OCI-LY7 (cell line): ENCODE measurements at regions of chr14 and their contacts with region 1.

Region 1: DNA sequence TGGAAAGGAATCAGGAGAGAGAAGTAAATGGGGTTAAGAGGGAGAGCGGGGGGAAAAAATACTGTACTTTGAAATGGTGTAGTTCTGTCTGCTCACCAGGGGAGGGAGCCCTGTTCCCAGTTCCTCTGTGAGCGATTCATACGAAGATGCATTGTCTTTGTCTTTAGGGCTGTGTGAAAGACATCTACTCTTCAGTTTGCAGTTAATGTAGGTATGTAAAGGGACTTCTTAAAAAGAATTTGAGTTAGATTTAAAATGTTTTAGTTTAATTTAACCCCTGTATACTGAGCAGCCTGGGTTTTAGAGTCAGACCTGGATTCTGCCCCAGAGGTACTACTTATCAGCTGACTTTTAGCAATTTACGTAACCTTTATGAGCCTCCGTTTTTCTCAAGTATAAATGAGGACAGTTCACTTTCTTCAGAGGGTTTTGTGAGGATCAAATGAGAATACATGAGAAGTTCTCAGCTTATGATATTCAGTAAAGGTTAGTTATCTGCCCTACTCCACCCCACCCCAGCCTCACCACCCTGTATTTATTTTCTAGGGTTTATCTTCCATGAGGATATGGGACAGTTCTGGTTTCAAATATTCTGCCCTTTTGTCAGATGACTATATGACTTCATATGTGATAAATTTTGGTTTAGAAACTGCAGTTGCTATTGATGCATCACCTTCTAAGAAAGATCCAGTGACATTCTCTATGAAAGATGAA is 82.5 kb upstream of the EVL start:
- DNase-seq: peak; percentile 72
- H3K4me3 ChIP-seq: no peak overlapping the region
- H3K27ac ChIP-seq: no peak overlapping the region
- H3K4me1 ChIP-seq: peaks cover 3% of the 10 kb centered on the region
- CTCF ChIP-seq: peak; percentile 97

Region 2: DNA sequence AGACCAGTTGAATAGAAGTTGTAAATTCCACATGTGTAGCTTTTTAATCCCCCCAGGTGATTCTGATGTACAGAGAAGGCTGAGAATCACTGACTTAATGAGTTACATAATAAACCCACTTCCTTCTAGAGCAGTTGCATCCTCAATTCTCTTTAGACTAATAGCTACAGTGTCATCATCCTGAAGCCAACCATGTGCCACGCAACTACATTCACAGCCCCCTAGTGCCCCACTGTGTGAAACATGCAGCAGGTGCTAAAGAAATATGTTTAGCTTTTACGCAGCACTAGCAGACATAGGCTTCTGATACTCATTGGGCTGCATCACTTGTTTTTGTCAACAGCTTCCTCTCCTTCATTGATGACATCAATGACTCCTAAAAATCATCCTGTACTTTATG is 1879.0 kb before region 1 on chr14:
- CTCF ChIA-PET with region 1: no interaction called
- POLR2A ChIA-PET with region 1: no interaction called
- intact Hi-C with region 1: no loop called
- DNase-seq: no peak
- H3K4me3 ChIP-seq: no peak overlapping the region
- H3K27ac ChIP-seq: no peak overlapping the region
- H3K4me1 ChIP-seq: no peaks in the 10 kb centered on the region
- CTCF ChIP-seq: no peak

Region 3: DNA sequence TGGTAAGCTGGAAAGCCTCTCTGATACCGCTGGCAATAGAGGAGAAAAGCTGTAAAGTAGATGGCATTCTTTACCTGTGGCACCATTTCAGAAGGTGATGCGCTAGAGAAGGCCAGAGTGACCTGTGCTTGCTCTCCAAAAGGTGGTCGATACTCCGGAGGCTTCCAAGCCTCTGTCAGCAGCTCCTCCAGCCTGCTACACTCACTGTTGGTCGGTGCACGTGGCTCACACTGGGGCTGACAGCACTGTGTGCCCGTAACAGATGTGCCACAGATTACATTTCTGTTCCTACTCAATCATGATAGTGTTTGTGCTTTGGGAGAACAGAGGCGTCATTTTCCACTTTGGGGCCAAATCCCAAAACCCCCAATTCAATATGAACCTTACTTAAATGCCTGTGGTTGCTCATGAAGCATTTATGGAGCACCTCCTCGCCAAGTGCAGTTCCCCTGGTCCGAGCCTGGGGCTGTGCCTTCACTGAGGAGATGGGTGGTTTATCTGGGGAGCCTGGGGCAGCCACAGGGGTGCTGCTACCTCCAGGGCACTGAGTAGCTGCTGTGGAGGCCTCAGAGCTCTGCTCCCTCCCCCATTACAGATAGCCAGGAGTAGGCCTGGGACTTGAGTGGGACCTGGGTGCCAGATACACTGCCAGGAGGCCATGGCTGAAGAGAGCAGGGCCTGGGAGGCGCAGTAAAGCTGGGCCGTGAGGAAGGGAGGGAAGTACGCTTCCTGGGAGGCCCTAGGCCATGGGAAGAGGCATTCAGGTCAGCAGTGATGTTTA is 474.6 kb before region 1 on chr14:
- CTCF ChIA-PET with region 1: no interaction called
- POLR2A ChIA-PET with region 1: no interaction called
- intact Hi-C with region 1: no loop called
- DNase-seq: no peak
- H3K4me3 ChIP-seq: no peak overlapping the region
- H3K27ac ChIP-seq: no peak overlapping the region
- H3K4me1 ChIP-seq: no peaks in the 10 kb centered on the region
- CTCF ChIP-seq: no peak

Region 4: DNA sequence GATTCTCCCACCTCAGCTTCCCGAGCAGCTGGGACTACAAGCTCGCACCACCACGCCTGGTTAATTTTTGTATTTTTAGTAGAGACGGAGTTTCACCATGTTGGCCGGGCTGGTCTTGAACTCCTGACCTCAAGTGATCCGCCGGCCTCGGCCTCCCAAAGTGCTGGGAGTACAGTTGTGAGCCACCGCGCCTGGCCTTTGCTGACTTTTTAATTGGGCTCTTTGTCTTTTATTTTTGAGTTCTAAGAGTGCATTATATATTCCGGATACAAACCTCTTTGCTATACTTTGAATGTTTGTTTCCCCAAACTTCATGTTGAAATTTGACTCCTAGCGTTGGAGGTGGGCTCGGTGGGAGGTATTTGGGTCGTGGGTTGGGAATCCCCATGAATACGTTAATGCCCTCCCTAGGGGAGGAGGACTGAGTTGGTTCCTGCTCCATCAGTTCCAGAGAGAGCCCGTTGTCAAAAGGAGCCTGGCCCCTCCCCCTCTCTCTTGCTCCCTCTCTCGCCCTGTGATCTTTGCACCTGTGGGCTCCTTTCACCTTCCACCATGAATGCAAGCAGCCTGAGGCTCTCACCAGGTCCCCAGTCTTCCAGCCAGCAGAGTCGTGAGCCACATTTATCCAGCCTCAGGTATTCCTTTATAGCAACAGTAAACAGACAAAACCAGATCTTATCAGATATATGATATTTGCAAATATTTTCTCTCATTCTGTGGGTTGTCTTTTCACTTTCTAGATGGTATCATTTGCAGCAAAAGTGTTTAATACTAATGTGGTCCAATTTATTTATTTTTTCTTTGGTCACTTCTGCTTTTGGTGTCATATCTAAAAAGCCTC is 20.6 kb before region 1 on chr14:
- CTCF ChIA-PET with region 1: no interaction called
- POLR2A ChIA-PET with region 1: no interaction called
- intact Hi-C with region 1: no loop called
- DNase-seq: no peak
- H3K4me3 ChIP-seq: no peak overlapping the region
- H3K27ac ChIP-seq: no peak overlapping the region
- H3K4me1 ChIP-seq: no peaks in the 10 kb centered on the region
- CTCF ChIP-seq: no peak

Region 5: DNA sequence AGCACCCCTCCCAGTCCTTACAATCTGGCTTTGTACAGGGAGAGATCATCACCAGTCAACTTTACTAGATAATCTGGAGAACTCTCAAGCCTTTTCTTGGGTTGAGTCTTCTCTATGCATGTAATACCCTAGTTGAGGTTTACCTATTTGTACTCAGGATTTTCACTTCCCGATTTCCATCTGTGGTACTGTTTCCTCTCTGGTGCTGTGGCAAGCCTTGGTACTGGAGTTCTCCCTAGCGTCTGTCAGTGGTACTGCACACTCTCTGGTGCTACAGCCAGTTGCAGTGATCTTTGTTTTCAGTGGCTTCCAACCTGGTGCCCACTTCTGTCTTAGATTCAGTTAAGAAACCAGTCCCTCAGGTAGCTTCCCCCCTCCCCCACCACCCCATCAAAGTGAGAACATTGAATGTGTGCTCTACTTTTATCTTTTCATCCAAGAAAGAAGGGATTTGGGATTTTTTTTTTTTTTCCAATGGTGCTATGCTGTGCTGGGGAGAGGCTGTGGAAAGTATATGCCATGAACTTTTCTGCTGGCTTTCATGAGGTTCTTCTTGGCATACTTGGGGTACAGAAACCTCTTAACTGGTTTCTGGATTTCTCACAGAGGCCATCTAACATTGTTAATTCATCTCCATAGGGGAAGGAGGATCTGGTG is 13.1 kb after region 1 on chr14:
- CTCF ChIA-PET with region 1: no interaction called
- POLR2A ChIA-PET with region 1: no interaction called
- intact Hi-C with region 1: loop called (anchors 2 kb)
- DNase-seq: peak; percentile 89
- H3K4me3 ChIP-seq: no peak overlapping the region
- H3K27ac ChIP-seq: no peak overlapping the region
- H3K4me1 ChIP-seq: peaks cover 9% of the 10 kb centered on the region
- CTCF ChIP-seq: peak; percentile 92

Region 6: GRCh38 chr14:100025111-100025510 is 42.4 kb after region 1 on chr14:
- CTCF ChIA-PET with region 1: interaction called, 4 read pairs
- POLR2A ChIA-PET with region 1: no interaction called
- intact Hi-C with region 1: loop called (anchors 2 kb)
- DNase-seq: peak; percentile 38
- H3K4me3 ChIP-seq: no peak overlapping the region
- H3K27ac ChIP-seq: no peak overlapping the region
- H3K4me1 ChIP-seq: no peaks in the 10 kb centered on the region
- CTCF ChIP-seq: peak; percentile 71

Region 7: GRCh38 chr14:100056964-100057795 is 74.5 kb after region 1 on chr14:
- CTCF ChIA-PET with region 1: no interaction called
- POLR2A ChIA-PET with region 1: no interaction called
- intact Hi-C with region 1: loop called (anchors 2 kb)
- DNase-seq: peak; percentile 58
- H3K4me3 ChIP-seq: no peak overlapping the region
- H3K27ac ChIP-seq: no peak overlapping the region
- H3K4me1 ChIP-seq: peaks cover 11% of the 10 kb centered on the region
- CTCF ChIP-seq: peak; percentile 76

Region 8: DNA sequence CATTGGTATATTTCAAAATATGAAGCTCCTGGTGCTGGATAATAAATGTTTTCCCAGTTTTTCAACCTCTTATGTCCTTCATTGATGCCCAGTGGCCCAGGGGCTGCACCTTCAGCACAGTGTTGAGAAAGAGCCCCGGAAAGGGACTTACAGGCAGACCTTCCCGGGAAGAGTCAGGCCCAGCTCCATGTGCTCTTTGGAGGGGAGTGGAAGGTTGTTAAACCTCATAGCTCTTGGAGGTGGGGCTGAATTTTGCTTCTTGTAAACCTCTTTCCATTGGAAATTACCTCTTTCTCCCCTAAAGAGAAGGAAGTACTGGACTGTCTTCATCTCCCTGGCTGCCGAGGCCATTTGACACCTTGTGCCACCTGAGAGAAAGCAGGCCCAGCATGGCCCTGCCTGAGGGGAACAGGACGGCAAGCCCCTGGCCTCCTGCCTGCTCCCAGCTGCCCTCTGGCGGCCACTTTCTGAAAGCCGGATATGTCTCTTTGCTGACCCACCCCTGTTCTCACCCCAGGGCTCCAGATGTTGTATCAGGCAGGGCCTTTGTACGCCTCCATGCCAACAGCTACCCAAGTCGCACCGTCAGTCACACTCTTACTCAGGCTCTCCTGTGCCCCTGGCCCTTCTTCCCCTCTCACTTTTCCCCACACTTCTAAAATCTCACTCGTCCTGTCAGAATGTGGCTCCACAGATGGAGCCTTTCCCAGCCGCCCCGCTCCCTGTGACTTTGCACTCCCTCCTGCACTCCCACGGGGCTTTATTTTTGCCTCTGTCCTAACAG is 125.5 kb after region 1 on chr14:
- CTCF ChIA-PET with region 1: no interaction called
- POLR2A ChIA-PET with region 1: interaction called, 3 read pairs
- intact Hi-C with region 1: loop called (anchors 1 kb)
- DNase-seq: peak; percentile 73
- H3K4me3 ChIP-seq: no peak overlapping the region
- H3K27ac ChIP-seq: no peak overlapping the region
- H3K4me1 ChIP-seq: peaks cover 8% of the 10 kb centered on the region
- CTCF ChIP-seq: peak; percentile 89

Region 9: DNA sequence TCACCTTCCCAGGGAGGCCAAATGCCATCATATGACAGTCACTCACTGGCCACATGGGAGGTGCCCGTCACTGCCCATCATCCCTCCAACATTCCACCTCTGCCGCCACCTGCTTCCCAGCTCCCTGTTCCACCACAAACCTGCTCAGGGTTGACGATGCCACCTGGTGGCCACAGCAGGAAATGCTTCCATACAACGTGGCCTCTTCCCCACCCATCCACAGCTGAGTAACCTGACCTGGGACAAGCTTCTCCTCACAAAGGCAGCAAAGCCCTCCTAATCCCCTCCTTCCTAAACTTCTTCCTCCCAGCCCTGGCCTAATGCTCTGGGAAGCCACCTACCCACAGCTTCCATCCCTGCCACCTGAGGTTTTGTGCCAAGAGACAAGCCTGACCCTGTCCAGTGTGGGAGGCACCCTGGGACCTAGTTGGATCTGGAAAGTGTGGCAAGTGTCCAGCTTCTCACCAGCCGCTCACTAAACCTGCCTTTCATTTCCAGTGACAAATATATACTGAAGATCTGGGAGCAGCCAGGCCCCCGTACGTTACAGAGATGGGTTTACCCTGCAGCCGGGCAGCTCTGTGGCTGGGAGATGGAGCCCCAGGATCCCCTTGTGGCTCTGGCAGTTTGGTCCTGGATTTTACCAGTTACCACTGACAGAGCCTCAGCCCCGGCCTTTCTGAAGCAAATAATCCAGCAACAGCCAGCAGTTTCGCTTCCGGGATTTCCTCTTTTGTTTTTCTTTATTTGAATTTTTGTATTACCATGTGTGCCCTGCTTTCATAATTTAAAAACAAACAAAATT is 172.6 kb after region 1 on chr14:
- CTCF ChIA-PET with region 1: no interaction called
- POLR2A ChIA-PET with region 1: no interaction called
- intact Hi-C with region 1: loop called (anchors 5 kb)
- DNase-seq: peak; percentile 54
- H3K4me3 ChIP-seq: no peak overlapping the region
- H3K27ac ChIP-seq: no peak overlapping the region
- H3K4me1 ChIP-seq: peaks cover 32% of the 10 kb centered on the region
- CTCF ChIP-seq: peak; percentile 91

Region 10: DNA sequence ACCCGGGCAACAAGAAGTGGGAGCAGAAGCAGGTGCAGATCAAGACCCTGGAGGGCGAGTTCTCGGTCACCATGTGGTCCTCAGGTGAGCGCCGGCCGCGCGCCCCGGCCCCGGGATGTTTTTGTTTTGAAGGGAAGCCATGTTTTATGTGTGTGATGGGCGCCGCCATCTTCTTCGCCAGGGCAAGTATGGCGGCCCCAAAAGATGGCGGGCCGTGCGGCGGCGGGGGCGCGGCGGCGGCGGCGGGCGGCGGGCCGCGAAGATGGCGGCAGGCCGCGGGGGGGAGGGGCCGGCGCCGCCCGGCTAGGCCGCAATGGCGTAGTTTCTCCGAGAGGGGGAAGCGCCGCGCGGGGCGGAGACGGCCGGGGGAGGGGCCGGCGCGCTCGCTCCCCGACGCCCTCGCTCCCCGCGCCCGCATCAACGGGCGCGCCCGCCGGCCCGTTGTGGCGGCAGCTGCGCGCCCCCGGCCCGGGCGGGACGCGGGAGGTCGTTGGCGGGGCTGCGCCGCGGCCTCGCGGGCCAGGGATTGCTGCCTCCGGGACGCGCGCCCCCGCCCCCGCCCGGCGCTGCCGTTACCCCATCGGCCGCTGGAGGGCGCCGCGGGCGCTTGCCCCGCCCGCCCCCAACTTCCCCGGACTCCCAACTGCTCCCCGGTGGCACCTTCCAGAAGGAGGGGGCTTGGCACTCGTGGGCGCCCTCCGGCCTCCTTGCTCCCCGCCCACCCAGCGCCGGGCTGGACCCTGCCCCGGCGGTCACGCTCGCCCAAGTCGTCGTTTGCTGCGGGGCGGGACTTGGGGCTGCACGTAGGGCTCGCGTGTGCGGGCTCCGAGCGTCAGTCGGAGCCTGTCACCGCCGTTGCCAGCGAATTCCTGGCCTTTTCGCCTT is 257.4 kb after region 1 on chr14:
- CTCF ChIA-PET with region 1: no interaction called
- POLR2A ChIA-PET with region 1: no interaction called
- intact Hi-C with region 1: no loop called
- DNase-seq: peak; percentile 86
- H3K4me3 ChIP-seq: peak overlapping the region; percentile 100
- H3K27ac ChIP-seq: peak overlapping the region; percentile 87
- H3K4me1 ChIP-seq: peaks cover 59% of the 10 kb centered on the region
- CTCF ChIP-seq: peak; percentile 73